ENCODE measurements at regions of chr2 and their contacts with region 1.

Region 1: GRCh38 chr2:224157655-224158054 is 118.6 kb upstream of the SERPINE2 start:
- DNase-seq: no peak
- H3K4me3 ChIP-seq: no peak overlapping the region
- H3K27me3 ChIP-seq: no peaks in the 10 kb centered on the region
- CTCF ChIP-seq: no peak

Region 2: DNA sequence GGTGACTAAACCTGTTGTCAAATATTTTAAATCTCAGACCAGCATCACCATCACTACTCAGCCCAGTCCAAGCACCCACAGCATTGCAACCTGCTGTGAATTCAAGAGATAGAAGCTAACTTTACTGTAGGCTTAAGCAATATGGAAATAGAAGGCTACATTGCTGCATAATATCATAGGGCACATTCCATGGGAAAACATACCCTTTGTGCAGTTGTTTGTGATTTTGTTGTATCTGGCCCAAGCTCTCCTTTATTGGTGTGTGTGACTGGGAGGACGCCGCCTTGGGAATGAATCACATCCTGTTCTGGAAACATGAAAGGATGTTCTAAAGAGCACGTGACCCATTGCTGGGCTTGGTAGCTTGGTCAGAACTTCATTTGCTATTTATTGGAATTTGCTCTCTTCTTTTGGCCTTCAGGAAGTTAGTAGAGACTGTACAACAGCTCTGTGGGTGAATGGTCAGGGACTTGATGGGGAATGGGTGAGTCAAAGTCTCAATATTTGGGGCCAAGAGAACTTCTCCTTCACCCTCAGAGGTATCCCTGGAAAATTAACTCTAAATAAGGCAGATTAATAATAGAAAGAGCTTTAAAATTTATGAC is 11.8 kb before region 1 on chr2:
- CTCF ChIA-PET with region 1: interaction called, 4 read pairs
- POLR2A ChIA-PET with region 1: interaction called, 14 read pairs
- DNase-seq: peak; percentile 86
- H3K4me3 ChIP-seq: no peak overlapping the region
- H3K27me3 ChIP-seq: no peaks in the 10 kb centered on the region
- CTCF ChIP-seq: no peak

Region 3: DNA sequence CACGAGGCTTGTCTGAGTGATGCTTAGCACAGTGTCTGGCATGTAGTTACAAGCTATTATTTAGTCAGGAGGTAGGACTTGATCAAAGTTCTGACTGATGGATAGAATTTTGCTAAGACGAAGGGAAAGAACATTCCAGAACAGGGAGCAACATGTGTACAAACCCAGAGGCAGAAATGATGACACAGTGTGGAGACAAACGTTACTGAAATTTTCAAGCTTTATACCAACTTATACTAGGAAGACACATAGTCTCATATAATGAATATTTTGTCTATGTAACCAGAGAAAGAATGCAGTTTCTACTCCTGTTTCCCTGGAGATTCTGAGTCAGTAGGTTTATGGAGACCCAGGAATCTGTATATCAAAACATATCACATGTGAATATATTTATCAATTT is 120.9 kb after region 1 on chr2:
- CTCF ChIA-PET with region 1: no interaction called
- POLR2A ChIA-PET with region 1: interaction called, 18 read pairs
- DNase-seq: peak; percentile 31
- H3K4me3 ChIP-seq: no peak overlapping the region
- H3K27me3 ChIP-seq: no peaks in the 10 kb centered on the region
- CTCF ChIP-seq: no peak

Region 4: DNA sequence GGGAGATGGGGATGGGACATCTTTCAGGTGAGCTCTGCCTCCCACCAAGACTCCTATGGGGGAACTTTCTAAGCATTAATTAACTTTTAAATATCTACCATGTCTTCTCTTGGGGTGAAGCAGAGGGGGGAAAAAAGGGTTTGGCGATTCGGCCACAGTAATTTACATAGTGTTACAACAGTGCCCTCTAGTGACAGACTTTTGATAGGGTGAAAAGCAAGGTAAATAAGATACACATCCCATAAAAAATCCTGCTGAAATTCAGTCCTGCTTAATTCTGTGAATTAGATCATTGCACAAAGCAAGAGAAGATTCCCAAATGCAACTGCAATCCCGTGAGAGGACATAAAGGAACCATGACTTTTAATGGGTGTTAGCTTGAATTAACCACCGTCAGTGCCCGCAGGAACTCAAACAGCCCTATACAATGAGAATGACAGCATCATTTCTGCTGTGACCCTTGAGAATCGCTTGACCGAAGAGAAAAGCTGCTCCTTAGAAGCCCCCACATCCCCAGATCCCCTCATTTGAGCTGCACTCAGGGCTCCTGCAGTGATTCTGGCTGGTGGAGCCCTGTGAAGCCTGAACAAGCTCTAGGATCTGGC is 211.5 kb after region 1 on chr2:
- CTCF ChIA-PET with region 1: no interaction called
- POLR2A ChIA-PET with region 1: no interaction called
- DNase-seq: no peak
- H3K4me3 ChIP-seq: no peak overlapping the region
- H3K27me3 ChIP-seq: peaks cover 5% of the 10 kb centered on the region
- CTCF ChIP-seq: peak; percentile 66